Pancreas (tissue), 10 donors: ENCODE measurements at regions of chr10 and their contacts with region 1.

Region 1: GRCh38 chr10:101782811-101783735 is at the start of gene NPM3:
- DNase-seq: peak; percentile 72 to 92 (median 82)
- ATAC-seq: peak; percentile 62 to 81 (median 77)
- H3K4me3 ChIP-seq: peak within 1 kb of the TSS; percentile 24 to 71 (median 47)
- H3K27ac ChIP-seq: no peak within 1 kb of the TSS
- H3K4me1 ChIP-seq: peaks cover 3 to 19% (median 16%) of the 10 kb centered on the region in 3 donors
- H3K27me3 ChIP-seq: no peaks in the 10 kb centered on the region
- CTCF ChIP-seq: no peak
- total RNA-seq, gene NPM3: 13.2 to 23.3 (median 20.1) TPM

Region 2: GRCh38 chr10:101214446-101215396 is 568.4 kb before region 1 on chr10:
- intact Hi-C with region 1: loop called in 1 of 3 experiments (anchors 10 kb)
- DNase-seq: peak in 5 of 6 donors; percentile 32 to 91 (median 66)
- ATAC-seq: peak; percentile 77 to 88 (median 82)
- H3K4me3 ChIP-seq: peak overlapping the region in 1 of 4 donors; percentile 21
- H3K27ac ChIP-seq: no peak overlapping the region
- H3K4me1 ChIP-seq: peaks cover 0 to 15% (median 0%) of the 10 kb centered on the region in 3 donors
- H3K27me3 ChIP-seq: peaks cover 2 to 66% (median 11%) of the 10 kb centered on the region in 4 donors
- CTCF ChIP-seq: peak; percentile 73 to 85 (median 78)

Region 3: DNA sequence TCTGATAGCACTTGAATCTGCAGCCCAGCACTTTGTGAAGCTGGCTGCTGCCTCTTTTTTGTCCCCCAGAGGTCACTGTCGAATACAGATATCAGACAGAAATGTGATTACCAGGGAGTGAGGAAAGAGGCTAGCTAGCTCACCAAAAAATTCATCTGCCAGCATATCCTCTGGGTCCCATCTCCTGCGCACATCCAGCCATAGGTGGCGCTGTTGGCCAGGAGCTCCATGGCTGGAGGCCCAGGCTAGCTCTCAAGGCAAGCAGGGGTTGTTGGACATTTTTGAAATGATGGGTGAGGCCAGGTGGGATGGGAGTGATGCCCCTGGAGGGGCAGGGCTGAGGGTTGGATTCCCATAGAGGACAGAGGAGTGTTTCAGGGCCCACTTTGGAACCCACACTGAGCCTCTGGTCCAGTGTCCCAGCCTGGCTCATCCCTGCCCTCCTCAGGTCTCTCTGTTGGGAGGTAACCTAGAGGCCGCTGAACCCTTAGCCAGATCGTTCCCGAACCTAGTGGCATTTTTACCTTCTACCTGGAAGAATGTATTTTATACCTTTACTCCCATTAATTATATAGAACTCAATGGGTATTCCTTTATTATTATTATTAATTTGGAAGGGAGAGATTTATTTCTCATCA is 180.2 kb before region 1 on chr10:
- intact Hi-C with region 1: loop called in 1 of 3 experiments (anchors 5 kb)
- DNase-seq: peak in 5 of 6 donors; percentile 32 to 84 (median 62)
- ATAC-seq: peak; percentile 74 to 89 (median 88)
- H3K4me3 ChIP-seq: no peak overlapping the region
- H3K27ac ChIP-seq: no peak overlapping the region
- H3K4me1 ChIP-seq: no peaks in the 10 kb centered on the region
- H3K27me3 ChIP-seq: no peaks in the 10 kb centered on the region
- CTCF ChIP-seq: peak; percentile 49 to 61 (median 55)

Region 4: GRCh38 chr10:101617102-101617823 is 165.8 kb before region 1 on chr10:
- intact Hi-C with region 1: loop called in 1 of 3 experiments (anchors 10 kb)
- DNase-seq: no peak
- ATAC-seq: no peak
- H3K4me3 ChIP-seq: no peak overlapping the region
- H3K27ac ChIP-seq: no peak overlapping the region
- H3K4me1 ChIP-seq: no peaks in the 10 kb centered on the region
- H3K27me3 ChIP-seq: no peaks in the 10 kb centered on the region
- CTCF ChIP-seq: no peak